Tibial artery (tissue), 4 donors: ENCODE measurements at regions of chr9 and their contacts with region 1.

Region 1: GRCh38 chr9:115013998-115014397 is 83.6 kb upstream of the TNFSF8 start:
- DNase-seq: peak; percentile 57 to 77
- H3K4me3 ChIP-seq: no peak overlapping the region
- H3K27ac ChIP-seq: no peak overlapping the region
- H3K4me1 ChIP-seq: peaks cover 0 to 10% (median 0%) of the 10 kb centered on the region in 4 donors
- H3K27me3 ChIP-seq: no peaks in the 10 kb centered on the region
- CTCF ChIP-seq: peak; percentile 83 to 90

Region 2: DNA sequence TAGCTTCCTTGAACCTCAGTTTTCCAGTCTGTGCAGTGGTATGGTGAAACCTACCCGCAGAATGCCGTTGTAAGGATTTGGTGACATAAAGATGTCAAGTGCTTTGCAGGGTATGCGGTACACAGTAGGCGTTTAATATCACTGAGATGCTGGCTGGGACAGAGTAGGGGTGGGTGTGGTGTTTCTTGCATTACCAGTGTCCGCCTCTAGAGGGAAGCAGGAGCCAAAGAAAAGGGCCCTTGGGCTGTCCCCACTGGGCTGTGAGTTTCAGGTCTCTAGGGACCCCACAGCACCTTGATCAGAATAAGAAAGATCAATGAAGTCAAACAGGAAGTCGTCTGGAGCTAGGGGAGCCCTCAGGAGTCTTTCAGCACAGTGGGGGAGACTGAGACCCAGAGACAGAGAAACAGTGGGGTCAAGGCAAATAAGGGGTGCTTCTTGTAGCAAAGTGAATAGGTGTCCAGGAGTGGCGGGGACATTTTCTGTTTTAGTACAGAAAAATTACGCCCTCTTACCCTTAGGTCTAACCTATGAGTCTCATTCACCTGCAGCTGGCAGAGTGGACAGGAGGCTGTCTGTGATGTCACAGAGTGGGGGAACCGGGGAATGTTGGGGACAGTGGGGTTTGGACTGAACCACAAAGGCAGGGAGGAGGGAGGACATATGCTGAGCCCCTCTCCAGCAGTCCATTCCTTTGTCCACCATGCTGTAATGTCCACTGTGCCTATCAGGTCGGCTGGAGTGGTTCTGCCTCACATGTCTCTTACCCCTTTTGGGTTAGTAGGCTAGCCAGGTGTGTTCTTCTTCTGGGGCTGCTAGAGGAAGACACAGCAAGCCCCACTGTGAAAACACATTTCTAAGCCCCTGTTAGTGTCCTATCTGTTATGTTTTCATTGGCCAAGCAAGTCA is 351.7 kb before region 1 on chr9:
- intact Hi-C with region 1: loop called (anchors 10 kb)
- DNase-seq: no peak
- H3K4me3 ChIP-seq: no peak overlapping the region
- H3K27ac ChIP-seq: no peak overlapping the region
- H3K4me1 ChIP-seq: no peaks in the 10 kb centered on the region
- H3K27me3 ChIP-seq: peaks cover 0 to 5% of the 10 kb centered on the region in 2 donors
- CTCF ChIP-seq: peak; percentile 65 to 74

Region 3: GRCh38 chr9:114738581-114739316 is 275.2 kb before region 1 on chr9:
- intact Hi-C with region 1: loop called (anchors 5 kb)
- DNase-seq: peak; percentile 74 to 82
- H3K4me3 ChIP-seq: no peak overlapping the region
- H3K27ac ChIP-seq: no peak overlapping the region
- H3K4me1 ChIP-seq: no peaks in the 10 kb centered on the region
- H3K27me3 ChIP-seq: no peaks in the 10 kb centered on the region
- CTCF ChIP-seq: peak; percentile 81 to 90

Region 4: DNA sequence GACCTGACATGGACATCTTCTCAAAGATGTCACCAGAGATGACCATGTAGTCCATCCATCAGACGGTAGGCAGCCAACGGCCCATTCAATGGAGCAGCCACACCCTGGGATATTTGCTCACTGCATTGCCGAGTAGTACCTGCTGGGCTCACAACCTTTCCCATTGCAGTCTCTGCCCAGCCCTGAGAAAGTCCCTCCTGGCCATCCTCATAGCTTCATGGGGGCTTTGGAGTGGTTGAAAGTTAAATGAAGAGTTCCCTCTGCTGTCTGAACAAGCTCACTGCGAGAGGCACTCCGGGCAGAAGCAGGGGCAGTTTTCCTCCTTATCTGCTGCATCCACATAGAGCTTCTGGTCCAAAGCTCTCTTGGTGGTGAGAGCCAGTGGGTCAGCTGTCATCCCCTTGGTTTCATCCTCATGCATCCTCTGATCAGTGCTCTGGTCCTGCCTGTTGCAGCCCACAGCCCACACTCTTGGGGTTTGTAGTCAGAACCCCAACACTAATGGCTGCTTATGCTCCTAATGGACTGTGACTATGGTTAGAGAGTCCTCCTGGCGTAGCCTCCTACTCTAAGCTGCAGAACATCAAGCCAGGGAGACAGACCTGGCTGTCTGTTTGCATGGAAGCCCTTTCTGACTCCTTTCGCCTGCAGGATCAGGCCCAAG is 107.0 kb before region 1 on chr9:
- intact Hi-C with region 1: loop called (anchors 5 kb)
- DNase-seq: no peak
- H3K4me3 ChIP-seq: no peak overlapping the region
- H3K27ac ChIP-seq: no peak overlapping the region
- H3K4me1 ChIP-seq: no peaks in the 10 kb centered on the region
- H3K27me3 ChIP-seq: no peaks in the 10 kb centered on the region
- CTCF ChIP-seq: peak; percentile 33 to 36

Region 5: DNA sequence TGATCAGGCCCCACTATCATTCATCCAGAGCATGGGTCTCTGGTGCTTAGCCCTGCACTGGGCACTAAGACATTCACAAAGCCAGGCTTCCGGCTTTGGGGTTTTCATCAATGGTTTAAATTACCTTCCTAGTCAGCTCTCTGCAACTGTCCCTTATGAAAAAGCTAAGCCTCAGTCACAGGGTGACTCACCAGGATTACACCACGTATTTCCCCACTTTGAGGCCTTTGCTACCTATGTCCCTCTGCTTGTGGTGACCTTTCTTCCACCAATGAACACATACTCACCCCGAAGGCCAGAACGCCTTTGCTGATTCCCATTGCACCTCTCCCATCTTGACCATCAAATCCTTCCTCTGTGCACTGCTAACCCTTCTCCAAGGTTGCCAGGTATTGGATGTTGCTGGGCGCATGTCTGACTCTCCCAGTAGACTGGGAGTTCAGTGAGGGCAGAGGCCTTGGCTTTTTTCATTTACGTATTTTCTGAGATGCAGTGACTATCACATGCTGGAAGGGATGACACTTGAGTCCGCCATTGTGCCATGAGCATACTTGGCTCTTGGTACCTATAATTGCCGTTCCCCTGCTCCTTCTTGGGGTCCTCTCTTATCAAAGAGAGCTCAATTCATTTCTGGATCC is 24.9 kb before region 1 on chr9:
- intact Hi-C with region 1: no loop called
- DNase-seq: no peak
- H3K4me3 ChIP-seq: no peak overlapping the region
- H3K27ac ChIP-seq: no peak overlapping the region
- H3K4me1 ChIP-seq: no peaks in the 10 kb centered on the region
- H3K27me3 ChIP-seq: peaks cover 0 to 2% of the 10 kb centered on the region in 2 donors
- CTCF ChIP-seq: no peak

Region 6: DNA sequence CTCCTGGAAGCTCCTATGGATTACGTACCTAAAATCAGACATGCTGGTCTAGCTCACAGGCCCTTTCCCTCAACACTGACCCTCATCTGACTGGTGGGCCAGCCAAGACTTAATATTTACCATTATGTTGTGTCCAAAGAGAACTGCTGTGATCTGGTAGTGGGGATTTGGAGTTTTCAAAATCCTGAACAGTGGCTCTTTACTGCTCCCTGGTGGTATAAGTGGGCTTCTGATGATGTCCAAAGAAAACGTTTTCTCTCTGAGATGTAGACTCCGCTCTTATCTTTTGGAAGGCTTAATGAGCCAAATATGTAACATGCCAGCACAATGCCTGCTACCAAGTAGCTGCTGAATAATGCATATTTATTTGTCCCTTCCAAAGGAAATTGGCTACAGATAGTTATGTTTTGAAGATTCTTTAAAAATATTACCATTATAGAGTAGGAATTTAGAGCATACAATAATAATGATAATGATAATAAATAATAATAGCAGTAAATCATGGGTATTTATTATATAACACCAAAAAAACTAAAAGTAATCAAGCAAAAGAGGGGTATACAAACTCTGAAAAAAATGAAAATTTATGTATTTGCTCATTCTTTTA is 510.6 kb after region 1 on chr9:
- intact Hi-C with region 1: loop called (anchors 10 kb)
- DNase-seq: no peak
- H3K4me3 ChIP-seq: no peak overlapping the region
- H3K27ac ChIP-seq: peak overlapping the region; percentile 46 to 64
- H3K4me1 ChIP-seq: peaks cover 0 to 28% (median 14%) of the 10 kb centered on the region in 4 donors
- H3K27me3 ChIP-seq: no peaks in the 10 kb centered on the region
- CTCF ChIP-seq: peak; percentile 78 to 87